ENCODE measurements at regions of chr4 and their contacts with region 1.

Region 1: DNA sequence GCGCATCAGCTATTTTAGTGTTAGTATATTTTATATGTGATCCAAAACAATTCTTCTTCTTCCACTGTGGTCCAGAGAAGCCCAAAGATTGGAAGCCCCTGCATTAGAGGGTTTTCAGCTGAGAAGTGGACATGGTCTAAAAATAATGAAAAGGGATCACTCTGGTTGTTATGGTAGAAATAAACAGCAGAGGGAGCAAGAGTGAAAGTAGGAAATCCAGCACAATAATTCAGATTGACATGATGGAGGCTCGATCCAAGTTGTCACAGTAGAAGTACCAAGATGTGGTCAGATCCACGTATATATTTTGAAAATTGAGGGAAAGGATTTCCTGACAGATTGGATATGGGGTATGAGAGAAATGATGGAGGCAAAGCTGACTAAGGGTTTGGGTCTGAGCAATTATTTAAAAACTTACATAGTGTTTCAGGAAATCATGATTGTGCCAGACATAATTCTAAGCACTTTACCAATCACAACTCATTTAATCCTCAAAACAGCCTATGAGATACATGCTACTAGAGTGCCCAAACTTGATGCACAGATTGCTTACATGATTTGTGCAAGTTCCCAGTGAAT is 17.0 kb upstream of the TMEM144 start:
- DNase-seq: no peak
- ATAC-seq: peak; percentile 72
- H3K4me3 Mint-ChIP-seq: no peak overlapping the region
- H3K27ac Mint-ChIP-seq: no peak overlapping the region
- H3K4me1 Mint-ChIP-seq: no peaks in the 10 kb centered on the region
- H3K27me3 Mint-ChIP-seq: no peaks in the 10 kb centered on the region
- CTCF ChIP-seq: 0 out of 2 replicates have a peak, but pooled peaks have one; percentile 24

Region 2: GRCh38 chr4:158253350-158253980 is 60.2 kb after region 1 on chr4:
- CTCF ChIA-PET with region 1: interaction called, 22 read pairs
- POLR2A ChIA-PET with region 1: no interaction called
- DNase-seq: peak; percentile 21
- ATAC-seq: peak; percentile 66
- H3K4me3 Mint-ChIP-seq: no peak overlapping the region
- H3K27ac Mint-ChIP-seq: no peak overlapping the region
- H3K4me1 Mint-ChIP-seq: peaks cover 17% of the 10 kb centered on the region
- H3K27me3 Mint-ChIP-seq: no peaks in the 10 kb centered on the region
- CTCF ChIP-seq: no peak

Measured in WTC11 (cell line).